Lower lobe of right lung (tissue), 2 donors: ENCODE measurements at regions of chr10 and their contacts with region 1.

Region 1: GRCh38 chr10:76303682-76304316 is 872.4 kb downstream of the LRMDA start:
- DNase-seq: peak; percentile 77
- ATAC-seq: peak; percentile 88 to 95
- H3K4me3 ChIP-seq: no peak overlapping the region
- H3K27ac ChIP-seq: no peak overlapping the region
- H3K4me1 ChIP-seq: peaks cover 35% of the 10 kb centered on the region
- H3K27me3 ChIP-seq: no peaks in the 10 kb centered on the region
- CTCF ChIP-seq: peak; percentile 68

Region 2: DNA sequence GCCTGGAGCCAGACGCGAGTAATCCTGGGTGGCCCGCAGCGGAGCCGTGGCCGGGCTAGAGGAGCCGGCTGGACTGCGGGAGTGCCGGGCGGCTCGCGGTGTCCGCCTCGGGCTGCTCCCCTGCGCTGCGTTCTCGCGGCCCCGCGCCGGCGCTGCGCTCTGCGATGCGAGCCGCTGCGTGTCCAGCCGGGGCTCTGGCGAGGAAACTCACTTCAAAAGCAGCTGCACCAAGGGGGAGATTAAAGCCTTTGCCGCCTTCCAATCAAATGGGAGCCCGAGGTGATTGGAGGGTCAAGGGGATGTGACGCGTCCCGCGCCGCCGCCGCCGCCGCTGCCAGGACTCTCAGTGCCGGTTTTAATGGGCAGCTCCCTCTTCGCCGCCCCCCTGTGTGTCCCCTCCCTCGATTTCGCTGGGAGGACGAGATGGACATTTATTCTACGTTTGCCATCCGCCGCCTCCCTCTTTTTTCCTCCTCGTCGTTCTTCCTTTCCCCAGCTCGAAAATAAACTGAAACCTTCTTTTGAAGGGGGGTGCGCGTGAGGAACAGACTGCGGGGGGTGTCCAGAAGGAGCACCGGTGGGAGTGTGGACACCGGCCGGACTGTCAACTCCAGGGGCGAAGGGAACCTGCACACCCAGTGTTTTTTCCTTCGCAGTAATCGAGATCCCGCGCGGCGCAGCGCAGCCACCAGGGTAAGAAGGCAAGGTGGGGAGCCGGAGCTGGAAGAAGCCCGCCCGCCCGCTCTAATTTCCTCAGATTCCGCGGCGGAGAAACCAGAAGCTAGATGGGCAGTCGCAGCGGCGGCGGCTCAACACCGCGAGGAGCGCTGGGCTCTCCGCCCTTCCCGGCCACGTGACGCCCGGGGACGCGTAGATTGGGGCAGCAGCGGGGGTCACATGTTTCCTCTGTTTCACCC is 902.0 kb before region 1 on chr10 and contains the start of gene ZNF503:
- intact Hi-C with region 1: loop called (anchors 10 kb)
- DNase-seq: peak; percentile 97
- ATAC-seq: peak; percentile 81 to 85
- H3K4me3 ChIP-seq: peak within 1 kb of the TSS; percentile 93
- H3K27ac ChIP-seq: peak within 1 kb of the TSS; percentile 97
- H3K4me1 ChIP-seq: peaks cover 15% of the 10 kb centered on the region
- H3K27me3 ChIP-seq: peaks cover 14% of the 10 kb centered on the region
- CTCF ChIP-seq: peak; percentile 8
- total RNA-seq, gene ZNF503: 28.3 TPM

Region 3: DNA sequence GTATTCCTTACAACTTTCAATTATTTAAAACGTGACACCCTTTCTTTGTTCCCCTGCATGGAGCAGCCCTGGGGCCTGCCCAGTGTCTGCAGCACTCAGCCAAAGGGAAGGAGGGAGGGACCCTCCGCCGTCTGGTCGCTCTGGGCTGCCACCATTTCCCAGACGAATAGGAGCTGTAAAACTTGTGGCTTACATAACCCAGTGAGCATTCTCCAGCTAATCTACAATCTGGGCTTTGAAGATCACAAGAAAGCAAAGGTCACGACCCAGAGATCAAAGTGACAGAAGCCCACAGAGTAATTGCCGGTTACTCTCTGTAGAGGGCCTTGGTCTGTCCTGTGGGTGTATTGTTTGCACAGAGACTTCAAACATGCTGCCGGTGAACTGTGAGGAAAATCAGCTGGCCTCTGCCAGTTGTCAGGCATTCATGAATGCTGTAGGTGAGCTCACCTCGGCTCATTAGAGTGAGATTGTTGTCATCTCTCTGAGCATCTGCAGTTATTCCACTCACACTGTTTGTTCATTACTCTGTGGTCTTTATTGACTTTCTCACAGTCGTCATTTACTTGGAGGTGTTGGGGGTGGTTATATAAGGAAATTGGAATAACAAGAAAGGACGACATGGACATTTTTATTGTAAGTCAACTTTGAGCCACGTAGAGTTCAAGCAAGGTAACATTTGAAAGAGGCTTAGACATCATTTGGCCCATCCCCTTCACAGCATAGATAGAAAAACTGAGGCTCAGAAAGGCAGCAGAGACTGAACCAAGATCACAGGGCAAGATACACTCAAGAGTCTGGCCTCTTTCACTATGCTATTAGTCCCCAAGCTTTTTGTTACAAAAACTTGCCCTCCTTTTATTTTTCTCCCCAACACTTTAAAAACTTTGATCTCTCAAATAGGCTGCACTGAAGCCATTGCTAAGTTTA is 252.5 kb before region 1 on chr10:
- intact Hi-C with region 1: no loop called
- DNase-seq: no peak
- ATAC-seq: peak; percentile 37
- H3K4me3 ChIP-seq: no peak overlapping the region
- H3K27ac ChIP-seq: no peak overlapping the region
- H3K4me1 ChIP-seq: no peaks in the 10 kb centered on the region
- H3K27me3 ChIP-seq: no peaks in the 10 kb centered on the region
- CTCF ChIP-seq: no peak

Region 4: GRCh38 chr10:76091926-76092325 is 211.9 kb before region 1 on chr10:
- intact Hi-C with region 1: no loop called
- DNase-seq: no peak
- ATAC-seq: no peak
- H3K4me3 ChIP-seq: no peak overlapping the region
- H3K27ac ChIP-seq: no peak overlapping the region
- H3K4me1 ChIP-seq: peaks cover 4% of the 10 kb centered on the region
- H3K27me3 ChIP-seq: no peaks in the 10 kb centered on the region
- CTCF ChIP-seq: no peak

Region 5: DNA sequence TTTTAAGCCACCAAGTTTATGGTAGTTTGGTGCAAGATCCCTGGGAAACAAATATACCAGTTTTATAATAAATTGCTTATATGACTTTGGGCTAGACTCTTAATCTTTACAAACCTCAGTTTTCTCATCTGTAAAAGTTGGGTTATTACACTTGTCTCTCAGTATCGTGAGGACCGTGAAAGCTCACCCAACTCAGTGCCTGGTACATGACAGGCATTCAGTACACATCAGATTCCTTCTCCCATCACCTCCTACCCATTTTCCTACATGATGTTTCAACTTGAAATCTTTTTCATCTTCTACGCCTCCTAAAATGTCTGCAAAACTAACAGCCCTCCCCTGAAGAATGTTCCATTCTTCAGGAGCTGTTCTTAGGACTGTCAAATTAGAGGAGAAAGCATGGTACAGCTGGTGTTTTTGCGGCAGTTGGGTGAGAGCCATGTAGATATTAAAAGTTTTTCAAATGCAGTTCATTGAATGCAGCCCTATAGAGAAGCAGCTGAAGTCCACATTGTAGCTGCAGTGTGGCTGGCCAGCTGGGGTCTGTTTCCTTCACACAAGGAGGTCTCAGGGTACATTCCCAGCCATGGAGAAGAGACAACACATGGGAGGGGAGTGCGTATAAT is 59.6 kb before region 1 on chr10:
- intact Hi-C with region 1: no loop called
- DNase-seq: no peak
- ATAC-seq: peak; percentile 26 to 75
- H3K4me3 ChIP-seq: no peak overlapping the region
- H3K27ac ChIP-seq: no peak overlapping the region
- H3K4me1 ChIP-seq: no peaks in the 10 kb centered on the region
- H3K27me3 ChIP-seq: no peaks in the 10 kb centered on the region
- CTCF ChIP-seq: no peak